IMR-90 (cell line): ENCODE measurements at regions of chr6 and their contacts with region 1.

Region 1: DNA sequence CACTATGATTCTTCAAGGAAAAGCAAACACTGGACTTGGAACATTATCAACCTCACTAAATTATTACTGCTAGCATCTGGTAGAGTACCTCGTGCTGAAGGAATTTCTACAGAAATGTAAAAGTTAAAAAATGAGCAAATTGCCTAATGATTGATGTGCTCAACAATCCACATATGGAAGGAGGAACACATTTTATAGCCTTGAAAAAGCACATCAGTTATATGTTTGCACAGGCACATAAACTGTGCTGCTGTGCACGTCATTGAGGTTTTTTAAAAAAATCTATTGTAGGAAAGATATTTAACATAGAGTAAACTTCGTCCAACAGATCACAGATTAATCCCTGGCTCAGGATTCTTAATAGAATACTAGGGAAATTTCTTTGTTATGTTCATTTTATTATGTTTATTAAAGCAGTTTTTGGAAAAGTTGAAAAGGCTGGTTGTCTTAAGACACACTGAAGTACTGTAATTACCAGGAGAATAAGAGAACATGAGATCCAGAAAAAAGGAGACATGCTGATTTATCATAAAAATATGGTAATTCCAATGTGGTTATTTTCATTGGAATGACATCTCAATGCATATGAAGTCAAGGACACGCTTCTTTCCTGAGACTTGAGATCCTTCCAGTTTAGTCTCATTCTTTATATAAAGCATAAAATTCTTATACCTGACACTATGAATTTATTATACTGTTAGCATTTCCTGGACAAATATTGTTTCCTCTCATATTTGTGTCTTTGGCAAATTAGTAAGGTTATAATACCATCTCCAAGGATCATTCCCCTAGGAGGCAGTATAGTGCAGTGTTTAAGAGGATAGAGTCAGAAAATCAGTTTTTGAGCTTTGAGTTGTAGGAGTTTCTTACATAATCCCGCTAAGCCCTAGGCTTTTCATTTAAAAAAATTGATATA is 511.1 kb downstream of the TENT5A start:
- DNase-seq: peak; percentile 49
- ATAC-seq: peak; percentile 60
- H3K4me3 ChIP-seq: no peak overlapping the region
- H3K27ac ChIP-seq: no peak overlapping the region
- H3K4me1 ChIP-seq: no peaks in the 10 kb centered on the region
- H3K27me3 ChIP-seq: no peaks in the 10 kb centered on the region
- CTCF ChIP-seq: peak; percentile 54
- POLR2A ChIP-seq: no peak
- RAD21 ChIP-seq: peak; percentile 62

Region 2: DNA sequence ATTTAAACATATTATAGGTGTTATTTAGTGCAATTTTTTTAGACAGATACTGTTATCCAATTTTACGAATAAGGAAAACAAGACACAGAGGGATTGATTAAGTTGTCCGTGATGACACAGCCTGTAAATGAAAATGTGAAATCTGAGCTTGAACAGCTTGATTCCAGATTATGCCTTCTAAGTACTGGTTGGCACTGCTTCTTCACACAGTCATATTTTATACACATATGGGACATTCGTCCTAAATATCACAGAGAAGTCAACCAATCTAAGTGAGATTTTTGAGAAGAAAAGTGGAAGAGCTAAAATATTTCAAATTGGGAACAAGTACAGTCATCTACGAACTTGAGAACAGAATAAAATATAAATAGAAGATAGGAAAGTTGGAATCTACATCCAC is 378.6 kb before region 1 on chr6:
- CTCF ChIA-PET with region 1: no interaction called
- POLR2A ChIA-PET with region 1: no interaction called
- dilution Hi-C with region 1: no loop called
- in situ Hi-C with region 1: no loop called
- intact Hi-C with region 1: no loop called
- DNase-seq: no peak
- ATAC-seq: no peak
- H3K4me3 ChIP-seq: no peak overlapping the region
- H3K27ac ChIP-seq: no peak overlapping the region
- H3K4me1 ChIP-seq: no peaks in the 10 kb centered on the region
- H3K27me3 ChIP-seq: no peaks in the 10 kb centered on the region
- CTCF ChIP-seq: no peak
- POLR2A ChIP-seq: no peak
- RAD21 ChIP-seq: no peak

Region 3: DNA sequence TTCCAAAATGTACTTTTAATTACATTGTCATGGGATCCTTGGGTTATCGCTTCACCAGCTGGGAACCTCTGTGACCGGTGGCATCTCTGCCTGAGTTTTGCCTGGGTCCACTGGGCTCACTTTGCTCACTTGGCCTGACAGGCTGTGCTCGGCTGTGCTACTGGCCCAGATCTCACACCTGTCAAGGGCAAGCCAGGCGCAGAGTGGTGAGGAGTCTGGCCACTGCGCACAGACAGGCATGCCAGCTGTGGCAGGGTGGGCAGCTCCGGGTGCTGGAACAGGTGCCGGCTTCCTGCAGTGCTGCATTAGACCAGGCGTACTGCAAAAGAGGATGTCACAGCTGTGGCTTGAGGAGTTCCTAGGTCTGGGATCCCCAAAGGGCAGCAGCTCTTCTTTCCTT is 21.3 kb after region 1 on chr6:
- CTCF ChIA-PET with region 1: no interaction called
- POLR2A ChIA-PET with region 1: no interaction called
- dilution Hi-C with region 1: no loop called
- in situ Hi-C with region 1: no loop called
- intact Hi-C with region 1: no loop called
- DNase-seq: no peak
- ATAC-seq: no peak
- H3K4me3 ChIP-seq: no peak overlapping the region
- H3K27ac ChIP-seq: no peak overlapping the region
- H3K4me1 ChIP-seq: no peaks in the 10 kb centered on the region
- H3K27me3 ChIP-seq: no peaks in the 10 kb centered on the region
- CTCF ChIP-seq: no peak
- POLR2A ChIP-seq: no peak
- RAD21 ChIP-seq: no peak

Region 4: GRCh38 chr6:81465859-81466258 is 224.5 kb after region 1 on chr6:
- CTCF ChIA-PET with region 1: no interaction called
- POLR2A ChIA-PET with region 1: no interaction called
- dilution Hi-C with region 1: no loop called
- in situ Hi-C with region 1: no loop called
- intact Hi-C with region 1: loop called (anchors 1 kb)
- DNase-seq: peak; percentile 24
- ATAC-seq: no peak
- H3K4me3 ChIP-seq: no peak overlapping the region
- H3K27ac ChIP-seq: no peak overlapping the region
- H3K4me1 ChIP-seq: no peaks in the 10 kb centered on the region
- H3K27me3 ChIP-seq: no peaks in the 10 kb centered on the region
- CTCF ChIP-seq: peak; percentile 55
- POLR2A ChIP-seq: no peak
- RAD21 ChIP-seq: peak; percentile 56

Region 5: DNA sequence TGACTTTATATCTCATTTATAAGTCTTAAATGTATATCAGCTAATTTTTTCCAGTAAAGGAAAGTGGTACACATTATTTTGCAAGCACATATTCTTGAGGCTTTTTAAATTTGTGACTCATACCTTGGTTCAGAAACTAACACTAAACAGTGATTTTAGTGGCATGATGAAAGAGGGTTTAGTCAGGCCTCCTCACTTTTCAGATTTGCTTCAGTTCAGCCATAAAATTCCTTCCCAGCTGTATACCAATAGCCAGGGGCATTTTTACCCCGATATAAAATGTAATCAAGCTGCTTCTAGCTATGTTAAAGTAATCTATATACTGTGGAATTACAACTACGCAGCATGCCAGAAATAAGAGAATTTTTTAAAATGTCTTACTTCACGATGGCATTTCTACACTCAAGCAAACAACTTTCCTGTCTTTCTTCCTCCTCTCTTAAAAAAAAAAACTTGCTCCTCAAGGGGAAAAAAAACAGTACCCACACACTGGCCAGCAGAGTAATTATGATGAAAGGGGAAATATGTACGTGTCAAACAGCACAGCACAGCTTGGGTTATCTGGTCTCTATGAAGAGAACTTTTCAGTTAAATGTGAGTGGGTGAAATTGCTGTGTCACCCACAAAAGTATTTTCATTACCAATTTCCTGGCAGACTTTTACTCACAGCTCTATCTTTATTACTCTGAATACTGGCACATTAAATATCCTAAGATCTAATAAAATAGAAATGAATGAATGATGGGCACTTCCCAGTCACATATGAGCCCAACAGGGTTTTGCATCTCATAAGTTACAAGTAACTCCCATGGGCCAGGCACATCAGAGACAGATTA is 755.9 kb after region 1 on chr6:
- CTCF ChIA-PET with region 1: no interaction called
- POLR2A ChIA-PET with region 1: no interaction called
- dilution Hi-C with region 1: no loop called
- in situ Hi-C with region 1: no loop called
- intact Hi-C with region 1: loop called (anchors 5 kb)
- DNase-seq: peak; percentile 88
- ATAC-seq: peak; percentile 73
- H3K4me3 ChIP-seq: no peak overlapping the region
- H3K27ac ChIP-seq: peak overlapping the region; percentile 61
- H3K4me1 ChIP-seq: peaks cover 19% of the 10 kb centered on the region
- H3K27me3 ChIP-seq: no peaks in the 10 kb centered on the region
- CTCF ChIP-seq: no peak
- POLR2A ChIP-seq: 0 out of 2 replicates have a peak, but pooled peaks have one; percentile 20
- RAD21 ChIP-seq: no peak

Region 6: DNA sequence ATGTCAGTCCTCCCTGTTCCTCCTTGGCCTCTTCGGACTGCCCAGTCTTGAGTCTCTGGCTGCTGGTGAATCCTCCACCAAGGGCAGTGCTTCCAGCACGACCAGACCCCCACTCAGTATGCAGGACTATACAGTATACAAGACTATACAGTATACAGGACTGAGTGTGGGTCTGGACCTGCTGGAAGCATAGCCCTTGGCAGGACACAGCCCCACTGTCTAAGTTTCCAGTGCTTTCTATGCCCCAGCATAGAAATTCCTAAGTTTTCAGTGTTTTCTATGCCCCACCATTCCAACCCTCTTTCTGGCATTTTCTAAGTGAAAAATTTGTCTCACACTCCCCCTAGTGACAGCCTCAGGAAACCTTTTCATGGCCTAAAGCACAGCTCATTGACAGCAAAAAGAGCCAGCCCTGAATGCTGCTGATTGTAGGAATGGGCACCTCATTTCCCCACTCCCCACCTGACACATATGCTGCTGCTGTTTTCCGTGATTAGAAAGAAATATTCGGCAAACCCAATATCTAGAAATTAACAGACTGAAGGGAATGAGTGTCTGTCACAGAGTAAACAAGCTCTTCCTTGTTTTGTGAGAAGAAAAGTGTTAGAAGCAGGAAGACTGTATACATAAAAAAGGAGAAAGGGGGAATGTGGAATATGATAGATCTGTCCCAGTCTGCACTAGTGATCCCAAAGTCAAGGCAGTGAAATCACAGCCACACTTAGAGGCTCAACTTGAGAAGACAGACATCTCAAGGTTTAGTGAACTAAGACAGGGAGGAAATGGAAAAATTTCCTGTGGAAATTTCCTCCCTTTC is 799.2 kb after region 1 on chr6:
- CTCF ChIA-PET with region 1: no interaction called
- POLR2A ChIA-PET with region 1: no interaction called
- dilution Hi-C with region 1: no loop called
- in situ Hi-C with region 1: loop called (anchors 25 kb)
- intact Hi-C with region 1: loop called (anchors 10 kb)
- DNase-seq: peak; percentile 59
- ATAC-seq: peak; percentile 99
- H3K4me3 ChIP-seq: no peak overlapping the region
- H3K27ac ChIP-seq: no peak overlapping the region
- H3K4me1 ChIP-seq: no peaks in the 10 kb centered on the region
- H3K27me3 ChIP-seq: no peaks in the 10 kb centered on the region
- CTCF ChIP-seq: peak; percentile 80
- POLR2A ChIP-seq: 0 out of 2 replicates have a peak, but pooled peaks have one; percentile 24
- RAD21 ChIP-seq: peak; percentile 80

Region 7: GRCh38 chr6:82178077-82178758 is 936.8 kb after region 1 on chr6:
- CTCF ChIA-PET with region 1: no interaction called
- POLR2A ChIA-PET with region 1: no interaction called
- dilution Hi-C with region 1: no loop called
- in situ Hi-C with region 1: no loop called
- intact Hi-C with region 1: loop called (anchors 5 kb)
- DNase-seq: peak; percentile 55
- ATAC-seq: peak; percentile 72
- H3K4me3 ChIP-seq: no peak overlapping the region
- H3K27ac ChIP-seq: no peak overlapping the region
- H3K4me1 ChIP-seq: no peaks in the 10 kb centered on the region
- H3K27me3 ChIP-seq: no peaks in the 10 kb centered on the region
- CTCF ChIP-seq: peak; percentile 64
- POLR2A ChIP-seq: no peak
- RAD21 ChIP-seq: peak; percentile 81